ENCODE measurements at regions of chr17 and their contacts with region 1.

Region 1: GRCh38 chr17:28902819-28903545 is at the start of gene DHRS13:
- DNase-seq: peak; percentile 85 to 93
- ATAC-seq: peak; percentile 89 to 94 (median 92)
- H3K4me3 ChIP-seq: peak within 1 kb of the TSS; percentile 19 to 83 (median 73)
- H3K27ac ChIP-seq: peak within 1 kb of the TSS; percentile 48 to 88 (median 78)
- H3K4me1 ChIP-seq: peaks cover 6 to 49% (median 22%) of the 10 kb centered on the region in 9 donors
- H3K27me3 ChIP-seq: no peaks in the 10 kb centered on the region
- CTCF ChIP-seq: peak; percentile 62 to 94 (median 86)
- total RNA-seq, gene DHRS13: 1.1 to 5.6 (median 2.2) TPM

Region 2: DNA sequence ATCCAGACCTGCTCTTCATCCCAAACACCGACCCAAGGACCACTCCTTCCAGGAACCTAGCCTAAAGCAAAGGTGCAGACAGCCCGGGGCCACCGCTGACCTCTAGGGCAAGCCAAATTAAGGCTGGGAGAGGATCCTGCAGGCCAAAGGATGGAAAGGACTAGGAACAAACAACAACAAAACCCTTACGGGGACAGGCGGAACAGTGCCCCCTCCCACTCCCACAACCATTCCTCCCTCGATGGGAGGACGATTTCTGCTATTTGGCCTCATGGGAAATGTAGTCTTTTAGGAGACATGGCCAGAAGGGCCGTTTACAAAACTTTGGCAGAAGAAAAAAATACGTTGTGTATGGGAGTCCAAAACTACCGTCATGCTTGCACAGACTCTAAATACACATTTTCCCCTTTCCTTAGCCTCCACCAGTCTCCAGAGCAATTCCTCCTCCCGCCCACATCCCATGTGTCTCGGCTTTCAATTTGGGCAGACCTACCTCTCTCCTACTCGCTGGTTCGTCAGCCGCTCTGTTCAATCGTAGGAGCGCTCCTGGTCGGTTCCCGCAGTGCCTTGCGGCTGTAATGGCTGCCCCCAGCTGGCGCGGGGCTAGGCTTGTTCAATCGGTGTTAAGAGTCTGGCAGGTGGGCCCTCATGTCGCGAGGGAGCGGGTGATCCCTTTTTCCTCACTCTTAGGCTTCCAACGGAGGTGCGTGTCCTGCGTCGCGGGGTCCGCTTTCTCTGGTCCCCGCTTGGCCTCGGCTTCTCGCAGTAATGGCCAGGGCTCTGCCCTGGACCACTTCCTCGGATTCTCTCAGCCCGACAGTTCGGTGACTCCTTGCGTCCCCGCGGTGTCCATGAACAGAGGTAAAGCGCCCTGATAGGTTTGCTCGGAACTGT is 48.3 kb before region 1 on chr17 and contains the start of gene ERAL1:
- intact Hi-C with region 1: loop called in 4 of 10 experiments (anchors 5 to 10 kb)
- DNase-seq: peak; percentile 76 to 87
- ATAC-seq: peak; percentile 98 to 100 (median 99)
- H3K4me3 ChIP-seq: peak within 1 kb of the TSS; percentile 68 to 98 (median 80)
- H3K27ac ChIP-seq: peak within 1 kb of the TSS; percentile 44 to 87 (median 75)
- H3K4me1 ChIP-seq: peaks cover 5 to 16% (median 12%) of the 10 kb centered on the region in 9 donors
- H3K27me3 ChIP-seq: no peaks in the 10 kb centered on the region
- CTCF ChIP-seq: no peak
- total RNA-seq, gene ERAL1: 34.2 to 41.6 (median 39.2) TPM

Region 3: GRCh38 chr17:28937044-28937729 is 34.2 kb after region 1 on chr17:
- intact Hi-C with region 1: loop called in 1 of 10 experiments (anchors 5 kb)
- DNase-seq: no peak
- ATAC-seq: peak in 4 of 8 donors; percentile 5 to 54 (median 24)
- H3K4me3 ChIP-seq: no peak overlapping the region
- H3K27ac ChIP-seq: peak overlapping the region in 5 of 10 donors; percentile 13 to 80 (median 38)
- H3K4me1 ChIP-seq: peaks cover 19 to 75% (median 69%) of the 10 kb centered on the region in 9 donors
- H3K27me3 ChIP-seq: no peaks in the 10 kb centered on the region
- CTCF ChIP-seq: no peak

Measured in heart right ventricle (tissue), 16 donors.